Activated naive CD4-positive, alpha-beta T cell treated with anti-CD3 and anti-CD28 coated beads, Interleukin-2, amount 10 ng/mL, durations not matched to agents 7 days and 5 days (primary cell): ENCODE measurements at regions of chr14 and their contacts with region 1.

Region 1: DNA sequence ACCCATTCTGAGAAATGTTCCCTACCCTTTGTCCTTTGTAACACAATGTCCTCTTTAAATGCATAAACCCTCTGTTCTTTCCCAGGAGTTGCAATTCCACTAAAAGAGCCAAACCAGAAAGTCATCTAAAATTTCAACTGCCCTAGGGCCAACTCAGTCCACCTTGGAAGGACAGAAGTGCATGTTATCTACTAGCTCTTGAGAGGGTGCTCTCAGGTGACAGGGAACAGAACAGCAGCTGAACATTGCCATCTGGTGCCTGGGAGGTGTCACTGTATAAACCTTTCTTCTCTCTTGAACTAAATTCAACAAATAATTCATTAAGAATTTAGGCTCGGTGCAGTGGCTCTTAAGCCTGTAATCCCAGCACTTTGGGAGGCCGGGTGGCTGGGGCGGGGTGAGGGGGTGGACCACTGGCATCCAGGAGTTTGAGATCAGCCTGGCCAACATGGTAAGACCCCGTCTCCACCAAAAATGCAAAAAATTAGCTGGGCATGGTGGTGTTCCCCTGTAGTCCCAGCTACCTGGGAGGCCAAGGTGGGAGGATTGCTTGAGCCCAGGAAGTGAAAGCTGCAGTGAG is 10.3 kb upstream of the FERMT2 start:
- DNase-seq: peak; percentile 67
- H3K4me3 Mint-ChIP-seq: no peak overlapping the region
- H3K27ac Mint-ChIP-seq: no peak overlapping the region
- H3K4me1 Mint-ChIP-seq: peaks cover 6% of the 10 kb centered on the region
- H3K27me3 Mint-ChIP-seq: no peaks in the 10 kb centered on the region

Region 2: DNA sequence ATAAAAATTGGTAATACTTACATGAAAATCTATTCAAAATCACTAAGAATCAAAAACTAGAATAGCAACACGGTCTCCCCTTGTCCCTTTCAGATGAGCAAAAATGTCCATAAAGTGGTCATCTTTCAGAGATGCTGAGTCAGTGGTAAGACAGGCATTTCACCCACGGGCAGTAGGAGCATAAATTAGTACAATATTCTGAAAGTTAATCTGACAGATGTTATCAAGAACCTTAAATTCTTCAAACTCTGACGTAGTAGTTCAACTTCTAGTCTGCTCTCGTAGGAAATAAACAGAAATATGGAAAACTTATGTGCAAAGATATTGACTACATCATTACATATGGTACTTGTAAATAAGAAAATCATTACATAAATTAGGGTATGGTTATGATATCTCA is 136.6 kb before region 1 on chr14:
- CTCF ChIA-PET with region 1: interaction called, 15 read pairs
- DNase-seq: no peak
- H3K4me3 Mint-ChIP-seq: no peak overlapping the region
- H3K27ac Mint-ChIP-seq: no peak overlapping the region
- H3K4me1 Mint-ChIP-seq: no peaks in the 10 kb centered on the region
- H3K27me3 Mint-ChIP-seq: peaks cover 4% of the 10 kb centered on the region

Region 3: DNA sequence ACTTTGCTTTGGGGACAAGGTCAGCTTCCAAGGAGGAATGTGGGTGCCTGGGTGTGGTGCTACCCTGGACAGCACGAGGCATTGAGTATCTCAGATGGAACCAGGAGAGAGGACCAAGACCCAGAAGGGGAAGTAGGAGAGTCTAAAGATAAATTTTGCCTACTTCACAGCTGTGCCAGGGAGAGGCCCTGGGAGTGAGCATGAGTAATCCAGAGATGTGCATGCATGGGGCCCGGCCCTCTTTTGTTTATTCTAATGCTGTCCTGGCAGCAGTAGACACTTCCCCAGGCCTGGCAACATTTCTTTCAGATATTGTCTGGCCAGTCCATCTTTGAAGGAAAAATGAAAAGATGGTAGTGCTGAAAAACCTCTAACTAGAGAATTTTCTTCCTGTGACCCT is 120.2 kb before region 1 on chr14:
- CTCF ChIA-PET with region 1: no interaction called
- DNase-seq: no peak
- H3K4me3 Mint-ChIP-seq: no peak overlapping the region
- H3K27ac Mint-ChIP-seq: no peak overlapping the region
- H3K4me1 Mint-ChIP-seq: no peaks in the 10 kb centered on the region
- H3K27me3 Mint-ChIP-seq: peaks cover 5% of the 10 kb centered on the region

Region 4: DNA sequence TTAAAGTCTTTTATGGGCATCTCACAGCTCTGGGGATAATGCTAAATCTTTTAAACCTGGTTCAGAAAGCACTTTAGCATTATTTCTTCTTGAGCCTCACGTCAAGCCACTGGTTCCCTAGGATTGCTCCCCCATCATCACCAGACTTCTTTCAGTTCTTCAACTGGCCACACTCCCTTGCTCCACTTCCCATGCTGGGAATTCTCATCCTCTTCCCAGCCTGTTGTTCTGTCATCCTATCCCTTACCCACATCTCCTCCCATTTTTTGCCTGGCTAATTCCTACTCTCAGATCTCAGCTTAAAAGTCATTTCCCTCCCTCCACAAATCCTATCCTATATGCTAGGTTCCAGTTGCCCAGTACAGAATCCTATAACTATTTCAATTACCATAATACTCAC is 24.7 kb before region 1 on chr14:
- CTCF ChIA-PET with region 1: no interaction called
- DNase-seq: no peak
- H3K4me3 Mint-ChIP-seq: no peak overlapping the region
- H3K27ac Mint-ChIP-seq: no peak overlapping the region
- H3K4me1 Mint-ChIP-seq: no peaks in the 10 kb centered on the region
- H3K27me3 Mint-ChIP-seq: peaks cover 9% of the 10 kb centered on the region

Region 5: GRCh38 chr14:52998376-52999015 is 37.3 kb after region 1 on chr14:
- CTCF ChIA-PET with region 1: no interaction called
- DNase-seq: no peak
- H3K4me3 Mint-ChIP-seq: no peak overlapping the region
- H3K27ac Mint-ChIP-seq: no peak overlapping the region
- H3K4me1 Mint-ChIP-seq: peaks cover 2% of the 10 kb centered on the region
- H3K27me3 Mint-ChIP-seq: peaks cover 10% of the 10 kb centered on the region

Region 6: GRCh38 chr14:53011053-53011462 is 49.9 kb after region 1 on chr14:
- CTCF ChIA-PET with region 1: no interaction called
- DNase-seq: no peak
- H3K4me3 Mint-ChIP-seq: no peak overlapping the region
- H3K27ac Mint-ChIP-seq: no peak overlapping the region
- H3K4me1 Mint-ChIP-seq: peaks cover 11% of the 10 kb centered on the region
- H3K27me3 Mint-ChIP-seq: peaks cover 44% of the 10 kb centered on the region